B cell (primary cell): ENCODE measurements at regions of chr2 and their contacts with region 1.

Region 1: GRCh38 chr2:89803722-89804121 is 1112.2 kb downstream of the RPIA start:
- DNase-seq: no peak
- ATAC-seq: no peak
- H3K4me3 ChIP-seq: no peak overlapping the region
- H3K4me3 Mint-ChIP-seq: no peak overlapping the region
- H3K27ac ChIP-seq: no peak overlapping the region
- H3K27ac Mint-ChIP-seq: no peak overlapping the region
- H3K4me1 ChIP-seq: no peaks in the 10 kb centered on the region
- H3K4me1 Mint-ChIP-seq: no peaks in the 10 kb centered on the region
- H3K27me3 ChIP-seq: no peaks in the 10 kb centered on the region
- H3K27me3 Mint-ChIP-seq: no peaks in the 10 kb centered on the region
- CTCF ChIP-seq: no peak

Region 2: DNA sequence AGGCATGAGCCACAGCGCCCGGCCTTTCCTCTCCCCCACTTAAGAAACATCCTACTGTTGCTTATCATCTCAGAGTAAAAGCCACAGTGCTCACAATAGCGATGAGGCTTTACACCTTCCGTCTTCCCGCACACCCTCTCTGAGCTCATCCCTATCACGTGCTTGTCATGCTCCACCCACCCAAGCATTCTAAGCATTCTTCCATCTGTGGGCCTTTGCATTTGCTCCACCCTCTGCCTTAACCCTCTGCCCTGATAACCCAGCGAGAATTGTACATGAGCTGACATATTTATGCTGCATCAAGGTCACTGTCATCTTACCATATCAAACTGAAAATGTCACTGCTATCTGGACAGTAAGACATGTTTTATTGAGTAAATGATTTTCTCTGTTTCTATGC is 1373.8 kb before region 1 on chr2:
- CTCF ChIA-PET with region 1: no interaction called
- POLR2A ChIA-PET with region 1: no interaction called
- intact Hi-C with region 1: no loop called
- DNase-seq: no peak
- ATAC-seq: no peak
- H3K4me3 ChIP-seq: no peak overlapping the region
- H3K4me3 Mint-ChIP-seq: no peak overlapping the region
- H3K27ac ChIP-seq: no peak overlapping the region
- H3K27ac Mint-ChIP-seq: no peak overlapping the region
- H3K4me1 ChIP-seq: no peaks in the 10 kb centered on the region
- H3K4me1 Mint-ChIP-seq: no peaks in the 10 kb centered on the region
- H3K27me3 ChIP-seq: no peaks in the 10 kb centered on the region
- H3K27me3 Mint-ChIP-seq: no peaks in the 10 kb centered on the region
- CTCF ChIP-seq: no peak

Region 3: GRCh38 chr2:89818873-89819272 is 15.2 kb after region 1 on chr2:
- CTCF ChIA-PET with region 1: no interaction called
- POLR2A ChIA-PET with region 1: no interaction called
- intact Hi-C with region 1: no loop called
- DNase-seq: no peak
- ATAC-seq: no peak
- H3K4me3 ChIP-seq: no peak overlapping the region
- H3K4me3 Mint-ChIP-seq: no peak overlapping the region
- H3K27ac ChIP-seq: no peak overlapping the region
- H3K27ac Mint-ChIP-seq: no peak overlapping the region
- H3K4me1 ChIP-seq: no peaks in the 10 kb centered on the region
- H3K4me1 Mint-ChIP-seq: no peaks in the 10 kb centered on the region
- H3K27me3 ChIP-seq: no peaks in the 10 kb centered on the region
- H3K27me3 Mint-ChIP-seq: no peaks in the 10 kb centered on the region
- CTCF ChIP-seq: no peak

Region 4: DNA sequence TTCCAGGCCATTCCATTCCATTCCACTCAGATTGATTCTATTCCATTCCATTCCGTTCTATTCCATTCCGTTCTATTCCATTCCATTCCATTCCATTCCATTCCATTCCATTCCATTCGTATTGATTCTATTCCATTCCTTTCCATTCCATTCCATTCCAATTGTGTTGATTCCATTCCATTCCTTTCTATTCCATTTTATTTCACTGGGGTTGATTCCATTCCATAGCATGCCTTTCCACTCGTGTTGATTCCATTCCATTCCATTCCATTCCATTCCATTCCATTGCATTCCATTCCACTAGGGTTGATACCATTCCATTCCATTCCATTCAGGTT is 30.0 kb after region 1 on chr2:
- CTCF ChIA-PET with region 1: no interaction called
- POLR2A ChIA-PET with region 1: no interaction called
- intact Hi-C with region 1: loop called (anchors 2 kb)
- DNase-seq: peak; percentile 25
- ATAC-seq: no peak
- H3K4me3 ChIP-seq: no peak overlapping the region
- H3K4me3 Mint-ChIP-seq: no peak overlapping the region
- H3K27ac ChIP-seq: no peak overlapping the region
- H3K27ac Mint-ChIP-seq: no peak overlapping the region
- H3K4me1 ChIP-seq: no peaks in the 10 kb centered on the region
- H3K4me1 Mint-ChIP-seq: peaks cover 4% of the 10 kb centered on the region
- H3K27me3 ChIP-seq: no peaks in the 10 kb centered on the region
- H3K27me3 Mint-ChIP-seq: no peaks in the 10 kb centered on the region
- CTCF ChIP-seq: no peak